Transverse colon (tissue), 4 donors: ENCODE measurements at regions of chr22 and their contacts with region 1.

Region 1: DNA sequence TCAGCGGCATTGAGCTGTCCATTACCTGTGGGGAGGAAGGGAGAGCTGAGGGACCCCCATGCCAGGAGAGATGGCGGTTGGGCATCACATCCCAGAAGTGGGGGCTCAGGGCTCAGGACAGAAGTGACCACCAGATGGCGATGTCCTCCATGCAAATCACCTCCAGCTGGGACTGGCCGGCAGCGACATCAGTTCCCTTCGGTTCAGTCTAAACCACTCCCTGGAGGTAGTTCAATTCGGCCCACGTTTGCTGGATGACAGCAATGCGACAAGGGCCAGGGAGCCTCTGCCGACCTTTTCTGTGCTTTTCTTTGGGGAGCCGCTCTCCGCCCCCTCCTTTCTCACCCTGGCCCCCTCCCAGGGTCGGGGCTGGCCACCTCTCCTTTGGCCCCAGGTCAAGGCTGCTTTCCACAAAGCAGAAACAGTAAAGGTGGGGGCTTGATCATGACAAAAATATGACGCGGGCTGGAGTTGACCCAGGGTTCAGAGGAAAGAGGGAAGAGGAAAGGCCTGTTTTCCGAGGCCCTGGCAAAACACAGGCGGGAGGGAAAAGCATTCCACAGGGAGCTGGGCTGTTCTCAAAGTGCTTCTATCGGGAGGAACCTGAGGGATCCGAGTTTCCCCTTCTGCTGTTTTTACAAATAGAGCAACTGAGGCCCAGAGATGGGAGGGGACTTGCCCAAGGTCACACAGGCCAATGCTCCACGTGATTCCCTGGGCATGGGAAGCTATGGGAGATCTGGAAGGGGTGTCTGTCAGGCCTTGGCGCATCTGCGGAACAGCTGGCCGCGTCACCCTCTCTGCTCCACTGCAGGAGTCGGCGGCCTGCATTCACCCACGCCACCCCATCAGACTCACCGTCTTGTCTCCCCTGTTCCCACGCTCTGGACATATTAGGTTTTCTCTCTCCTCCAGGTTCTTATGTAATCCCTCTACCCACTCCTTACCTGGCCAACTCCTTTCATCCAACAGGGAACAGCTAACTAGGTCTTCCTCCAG is 54.7 kb downstream of the FBXO7 start:
- DNase-seq: peak; percentile 87
- H3K4me3 ChIP-seq: no peak overlapping the region
- H3K27ac ChIP-seq: peak overlapping the region; percentile 27 to 76 (median 64)
- H3K4me1 ChIP-seq: peaks cover 7 to 38% (median 21%) of the 10 kb centered on the region in 4 donors
- H3K27me3 ChIP-seq: no peaks in the 10 kb centered on the region
- CTCF ChIP-seq: peak; percentile 85 to 93 (median 86)
- EP300 ChIP-seq: no peak
- POLR2A ChIP-seq: no peak

Region 2: GRCh38 chr22:32378707-32379272 is 150.5 kb before region 1 on chr22:
- in situ Hi-C with region 1: no loop called
- intact Hi-C with region 1: no loop called
- DNase-seq: peak; percentile 22
- H3K4me3 ChIP-seq: no peak overlapping the region
- H3K27ac ChIP-seq: no peak overlapping the region
- H3K4me1 ChIP-seq: no peaks in the 10 kb centered on the region
- H3K27me3 ChIP-seq: no peaks in the 10 kb centered on the region
- CTCF ChIP-seq: peak; percentile 19 to 55 (median 40)
- EP300 ChIP-seq: no peak
- POLR2A ChIP-seq: no peak

Region 3: GRCh38 chr22:32558681-32559355 is 29.5 kb after region 1 on chr22:
- in situ Hi-C with region 1: no loop called
- intact Hi-C with region 1: no loop called
- DNase-seq: peak; percentile 82
- H3K4me3 ChIP-seq: no peak overlapping the region
- H3K27ac ChIP-seq: peak overlapping the region in 2 of 4 donors; percentile 44 to 53
- H3K4me1 ChIP-seq: peaks cover 12 to 27% (median 21%) of the 10 kb centered on the region in 4 donors
- H3K27me3 ChIP-seq: no peaks in the 10 kb centered on the region
- CTCF ChIP-seq: no peak
- EP300 ChIP-seq: no peak
- POLR2A ChIP-seq: no peak

Region 4: GRCh38 chr22:32649515-32650200 is 120.4 kb after region 1 on chr22:
- in situ Hi-C with region 1: no loop called
- intact Hi-C with region 1: loop called (anchors 10 kb)
- DNase-seq: peak; percentile 31
- H3K4me3 ChIP-seq: no peak overlapping the region
- H3K27ac ChIP-seq: peak overlapping the region; percentile 31 to 54 (median 40)
- H3K4me1 ChIP-seq: peaks cover 0 to 2% (median 0%) of the 10 kb centered on the region in 4 donors
- H3K27me3 ChIP-seq: no peaks in the 10 kb centered on the region
- CTCF ChIP-seq: no peak
- EP300 ChIP-seq: no peak
- POLR2A ChIP-seq: no peak

Region 5: DNA sequence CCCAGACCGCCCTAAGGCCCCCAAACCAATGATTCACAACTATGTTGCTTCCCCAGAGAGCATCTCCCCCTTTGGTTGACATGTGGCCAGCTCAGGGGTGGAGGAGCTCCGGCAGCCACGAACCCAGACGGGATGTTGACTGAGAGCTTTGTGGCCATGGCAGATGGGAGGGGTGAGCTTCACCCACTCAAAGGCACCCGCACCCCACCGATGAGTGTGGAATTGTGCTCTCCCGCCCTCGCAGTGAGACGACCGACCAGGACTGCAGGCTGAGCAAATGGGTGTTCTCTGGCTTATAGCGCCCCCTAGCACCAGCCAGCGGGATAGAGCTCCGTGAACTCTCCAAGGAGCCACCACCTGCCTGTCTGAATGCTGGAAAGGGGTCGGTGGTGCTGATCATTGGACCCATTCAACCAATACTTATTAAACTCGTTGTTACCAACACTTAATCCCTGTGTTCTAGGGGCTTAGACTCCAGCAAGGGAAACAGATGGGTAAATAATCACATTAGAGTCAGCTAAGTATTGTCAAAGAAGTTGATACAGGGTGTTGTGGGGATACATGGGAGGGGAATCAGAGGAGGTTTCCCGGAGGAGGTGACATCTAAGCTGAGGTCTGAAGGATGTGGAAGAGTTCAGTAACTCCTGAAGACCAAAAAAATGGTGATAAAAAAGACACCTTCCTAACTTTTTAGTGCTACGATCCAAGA is 267.7 kb after region 1 on chr22:
- in situ Hi-C with region 1: loop called (anchors 10 to 25 kb)
- intact Hi-C with region 1: no loop called
- DNase-seq: peak; percentile 70
- H3K4me3 ChIP-seq: no peak overlapping the region
- H3K27ac ChIP-seq: no peak overlapping the region
- H3K4me1 ChIP-seq: peaks cover 7 to 20% (median 8%) of the 10 kb centered on the region in 4 donors
- H3K27me3 ChIP-seq: peaks cover 28% of the 10 kb centered on the region
- CTCF ChIP-seq: peak; percentile 83 to 90 (median 87)
- EP300 ChIP-seq: no peak
- POLR2A ChIP-seq: no peak

Region 6: DNA sequence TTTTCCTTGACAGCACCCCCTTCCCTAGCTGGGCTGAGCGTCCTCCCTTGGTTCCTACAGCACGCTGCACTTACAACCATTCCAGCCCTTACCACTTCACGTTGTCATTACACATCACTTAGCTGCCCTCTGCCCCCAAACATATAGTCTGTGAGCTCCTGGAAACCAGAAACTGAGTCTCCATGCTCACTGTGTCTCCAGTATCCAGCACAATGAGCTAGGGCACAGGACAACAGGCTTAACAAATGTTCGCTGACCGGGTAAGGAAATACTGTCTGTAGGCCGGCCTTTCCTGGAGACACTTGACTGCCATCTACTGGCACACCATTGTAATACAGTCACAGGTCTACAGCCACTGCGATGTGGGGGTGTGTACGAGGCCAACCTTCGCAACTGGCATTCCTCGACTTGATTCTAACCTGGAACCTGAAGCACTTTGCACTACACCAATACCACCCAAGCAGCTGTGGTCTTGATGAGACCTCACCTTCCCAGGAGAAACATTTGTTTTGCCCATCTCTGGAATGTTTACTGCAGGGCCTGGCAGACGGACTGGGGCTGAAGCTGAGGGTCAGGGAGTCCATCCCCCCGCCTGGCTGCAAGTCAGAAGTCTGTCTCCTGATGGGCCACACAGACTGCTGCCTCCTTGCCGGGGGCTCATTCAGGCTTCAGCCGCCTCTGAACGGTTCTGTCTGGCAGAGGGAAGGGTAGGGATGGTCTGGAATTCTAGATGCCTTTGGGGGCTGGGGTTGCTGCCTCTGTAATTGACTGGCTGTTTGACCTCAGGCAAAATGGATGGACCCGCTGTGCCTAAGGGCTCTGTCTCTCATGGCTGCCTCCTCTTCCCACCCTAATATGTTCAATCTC is 456.8 kb after region 1 on chr22:
- in situ Hi-C with region 1: loop called in 2 of 4 experiments (anchors 10 kb)
- intact Hi-C with region 1: loop called (anchors 5 kb)
- DNase-seq: peak; percentile 67
- H3K4me3 ChIP-seq: no peak overlapping the region
- H3K27ac ChIP-seq: no peak overlapping the region
- H3K4me1 ChIP-seq: peaks cover 0 to 4% (median 1%) of the 10 kb centered on the region in 4 donors
- H3K27me3 ChIP-seq: no peaks in the 10 kb centered on the region
- CTCF ChIP-seq: peak; percentile 70 to 88 (median 79)
- EP300 ChIP-seq: no peak
- POLR2A ChIP-seq: no peak

Region 7: DNA sequence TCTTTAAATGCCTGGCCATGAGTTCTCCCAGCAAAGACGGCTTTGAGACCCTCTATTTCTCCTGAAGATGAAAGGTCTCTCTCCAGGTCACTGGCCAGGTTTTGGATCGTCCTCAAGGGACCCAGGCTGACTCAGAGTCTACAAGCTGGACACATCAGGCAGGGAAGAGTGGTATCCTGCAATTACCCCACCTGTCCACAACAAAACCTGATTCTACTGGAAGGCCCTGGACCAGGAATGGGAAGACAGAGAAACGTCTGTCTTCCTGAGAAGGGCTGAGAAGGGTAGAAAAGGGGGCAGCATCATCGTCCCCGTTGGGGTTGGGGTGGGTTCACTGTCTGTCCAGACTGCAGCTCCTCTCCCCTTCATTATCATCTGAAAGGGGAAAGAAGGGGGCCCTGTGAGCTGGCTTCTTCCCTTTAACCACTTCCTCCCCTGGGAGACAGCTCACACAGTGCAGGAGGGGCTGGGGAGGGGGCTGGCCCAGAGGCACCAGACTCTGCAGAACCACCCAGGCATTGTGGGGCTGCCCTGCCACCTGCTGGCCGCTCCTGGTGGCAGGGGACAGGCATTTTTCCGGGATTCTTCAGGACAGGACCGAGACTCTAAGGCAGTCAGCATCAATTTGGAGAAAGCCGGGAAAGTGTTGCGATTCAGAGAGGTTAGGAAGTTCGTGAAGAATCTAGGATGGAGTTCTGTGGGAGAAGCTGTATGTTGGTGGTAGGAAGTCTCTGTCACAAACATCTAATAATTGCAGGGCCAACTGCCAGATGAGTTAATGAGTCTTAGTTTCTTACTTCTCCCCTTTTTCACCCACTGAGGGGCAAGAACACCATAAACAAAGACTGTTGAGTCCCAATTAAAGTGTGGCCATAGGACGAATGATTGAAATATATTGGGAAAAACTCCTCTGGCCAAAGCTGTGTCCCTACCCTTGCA is 471.3 kb after region 1 on chr22:
- in situ Hi-C with region 1: loop called in 3 of 4 experiments (anchors 5 to 10 kb)
- intact Hi-C with region 1: loop called (anchors 5 kb)
- DNase-seq: peak; percentile 27
- H3K4me3 ChIP-seq: no peak overlapping the region
- H3K27ac ChIP-seq: no peak overlapping the region
- H3K4me1 ChIP-seq: no peaks in the 10 kb centered on the region
- H3K27me3 ChIP-seq: no peaks in the 10 kb centered on the region
- CTCF ChIP-seq: peak; percentile 64 to 86 (median 80)
- EP300 ChIP-seq: no peak
- POLR2A ChIP-seq: no peak